WTC11 (cell line): ENCODE measurements at regions of chr17 and their contacts with region 1.

Region 1: GRCh38 chr17:38584350-38584925 is 21.3 kb downstream of the SRCIN1 start:
- DNase-seq: peak; percentile 78
- ATAC-seq: peak; percentile 60
- H3K4me3 Mint-ChIP-seq: 0 out of 2 replicates have a peak overlapping the region, but pooled peaks have one; percentile 14
- H3K27ac Mint-ChIP-seq: peak overlapping the region; percentile 36; the same call in 1 of the 2 replicates
- H3K4me1 Mint-ChIP-seq: peaks cover 59% of the 10 kb centered on the region
- H3K27me3 Mint-ChIP-seq: peaks cover 38% of the 10 kb centered on the region
- CTCF ChIP-seq: peak; percentile 97

Region 2: GRCh38 chr17:38533866-38534497 is 50.5 kb before region 1 on chr17:
- CTCF ChIA-PET with region 1: interaction called, 16 read pairs
- POLR2A ChIA-PET with region 1: no interaction called
- DNase-seq: no peak
- ATAC-seq: peak; percentile 27
- H3K4me3 Mint-ChIP-seq: no peak overlapping the region
- H3K27ac Mint-ChIP-seq: no peak overlapping the region
- H3K4me1 Mint-ChIP-seq: peaks cover 33% of the 10 kb centered on the region
- H3K27me3 Mint-ChIP-seq: peaks cover 53% of the 10 kb centered on the region
- CTCF ChIP-seq: no peak

Region 3: DNA sequence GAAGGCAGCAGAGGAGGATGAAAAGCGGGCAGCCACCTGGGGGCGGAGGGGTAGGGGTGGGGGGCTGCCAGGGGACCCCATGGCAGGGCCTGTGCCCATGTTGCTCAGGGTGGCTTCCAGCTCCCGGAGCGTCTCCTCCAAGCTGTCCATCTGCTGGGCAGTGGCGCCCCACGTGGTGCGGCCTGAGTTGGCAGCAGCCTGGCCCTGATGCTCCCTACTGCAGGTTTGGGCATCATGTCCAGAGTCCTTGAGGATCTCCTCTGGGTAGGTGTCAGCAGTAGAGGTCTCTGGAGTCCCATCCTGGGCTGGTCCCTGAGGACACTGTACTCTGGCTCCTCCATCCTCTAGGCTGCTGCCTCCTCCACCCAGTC is 39.6 kb before region 1 on chr17:
- CTCF ChIA-PET with region 1: interaction called, 12 read pairs
- POLR2A ChIA-PET with region 1: no interaction called
- DNase-seq: peak; percentile 43
- ATAC-seq: peak; percentile 20; the same call in 1 of the 2 replicates
- H3K4me3 Mint-ChIP-seq: no peak overlapping the region
- H3K27ac Mint-ChIP-seq: no peak overlapping the region
- H3K4me1 Mint-ChIP-seq: peaks cover 18% of the 10 kb centered on the region
- H3K27me3 Mint-ChIP-seq: peaks cover 2% of the 10 kb centered on the region; the same call in 1 of the 2 replicates
- CTCF ChIP-seq: no peak

Region 4: GRCh38 chr17:38598536-38598935 is 14.1 kb after region 1 on chr17:
- CTCF ChIA-PET with region 1: interaction called, 160 read pairs
- POLR2A ChIA-PET with region 1: interaction called, 3 read pairs
- DNase-seq: peak; percentile 92
- ATAC-seq: peak; percentile 85
- H3K4me3 Mint-ChIP-seq: peak overlapping the region; percentile 35; the same call in 1 of the 2 replicates
- H3K27ac Mint-ChIP-seq: peak overlapping the region; percentile 87
- H3K4me1 Mint-ChIP-seq: peaks cover 91% of the 10 kb centered on the region
- H3K27me3 Mint-ChIP-seq: peaks cover 46% of the 10 kb centered on the region
- CTCF ChIP-seq: no peak

Region 5: GRCh38 chr17:38605888-38606645 is 21.6 kb after region 1 on chr17 and contains the start of gene SRCIN1:
- CTCF ChIA-PET with region 1: interaction called, 160 read pairs
- POLR2A ChIA-PET with region 1: interaction called, 4 read pairs
- DNase-seq: peak; percentile 74
- ATAC-seq: peak; percentile 5
- H3K4me3 Mint-ChIP-seq: peak within 1 kb of the TSS; percentile 71
- H3K27ac Mint-ChIP-seq: no peak within 1 kb of the TSS
- H3K4me1 Mint-ChIP-seq: peaks cover 72% of the 10 kb centered on the region
- H3K27me3 Mint-ChIP-seq: peaks cover 44% of the 10 kb centered on the region
- CTCF ChIP-seq: peak; percentile 99
- total RNA-seq, gene SRCIN1: 10.7 to 17.3 TPM (median 11.1 TPM) in 3 replicates